ENCODE measurements at regions of chr12 and their contacts with region 1.

Region 1: GRCh38 chr12:55829967-55830600 is 697 bp upstream of the DNAJC14 start:
- DNase-seq: peak in 28 of 35 experiments; percentile 10 to 52 (median 28)
- ATAC-seq: peak; percentile 10 to 19 (median 12)
- H3K4me3 ChIP-seq: peak overlapping the region; percentile 72 to 86
- H3K4me3 Mint-ChIP-seq: peak overlapping the region; percentile 94 to 97 (median 94)
- H3K27ac ChIP-seq: peak overlapping the region; percentile 50
- H3K27ac Mint-ChIP-seq: peak overlapping the region; percentile 88 to 90
- H3K4me1 ChIP-seq: peaks cover 26 to 62% of the 10 kb centered on the region in 2 experiments
- H3K4me1 Mint-ChIP-seq: peaks cover 53 to 65% (median 65%) of the 10 kb centered on the region in 3 donors
- H3K27me3 ChIP-seq: no peaks in the 10 kb centered on the region
- H3K27me3 Mint-ChIP-seq: no peaks in the 10 kb centered on the region

Region 2: GRCh38 chr12:55817346-55818139 is 12.5 kb before region 1 on chr12 and contains the starts of genes ORMDL2 and SARNP:
- CTCF ChIA-PET with region 1: interaction called in 1 of 2 experiments, 62 read pairs
- POLR2A ChIA-PET with region 1: interaction called, 14 to 84 read pairs
- DNase-seq: peak; percentile 77 to 100 (median 97)
- ATAC-seq: peak; percentile 91 to 96 (median 94)
- H3K4me3 ChIP-seq: peak within 1 kb of the TSS; percentile 83 to 97
- H3K4me3 Mint-ChIP-seq: no peak within 1 kb of the TSS
- H3K27ac ChIP-seq: peak within 1 kb of the TSS; percentile 65
- H3K27ac Mint-ChIP-seq: no peak within 1 kb of the TSS
- H3K4me1 ChIP-seq: peaks cover 24 to 26% of the 10 kb centered on the region in 2 experiments
- H3K4me1 Mint-ChIP-seq: peaks cover 41 to 51% (median 50%) of the 10 kb centered on the region in 3 donors
- H3K27me3 ChIP-seq: no peaks in the 10 kb centered on the region
- H3K27me3 Mint-ChIP-seq: no peaks in the 10 kb centered on the region
- total RNA-seq, gene ORMDL2: 19.0 to 46.8 (median 41.6) TPM
- total RNA-seq, gene SARNP: 36.9 to 50.3 (median 46.8) TPM

Region 3: DNA sequence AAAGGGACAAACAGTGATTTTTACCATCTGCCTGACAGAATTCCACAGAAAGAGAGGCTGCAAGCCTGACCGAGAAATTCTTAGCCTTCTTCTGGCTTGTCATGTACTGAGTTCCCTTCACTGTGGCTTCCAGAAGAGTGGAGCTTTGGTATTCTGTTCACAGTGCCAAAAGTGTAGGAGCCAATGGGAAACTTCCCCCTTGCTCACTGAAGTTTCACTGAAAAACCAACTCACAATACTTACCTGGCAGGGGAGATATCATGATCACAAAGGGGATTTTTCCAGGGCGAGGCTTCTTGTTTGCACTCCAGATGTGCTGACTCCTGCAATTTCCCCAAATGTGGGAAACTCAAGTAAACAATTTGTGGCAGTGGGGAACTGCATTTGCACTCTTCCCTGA is 44.4 kb after region 1 on chr12:
- CTCF ChIA-PET with region 1: no interaction called
- POLR2A ChIA-PET with region 1: interaction called in 1 of 2 experiments, 10 read pairs
- DNase-seq: no peak
- ATAC-seq: no peak
- H3K4me3 ChIP-seq: no peak overlapping the region
- H3K4me3 Mint-ChIP-seq: no peak overlapping the region
- H3K27ac ChIP-seq: no peak overlapping the region
- H3K27ac Mint-ChIP-seq: no peak overlapping the region
- H3K4me1 ChIP-seq: no peaks in the 10 kb centered on the region
- H3K4me1 Mint-ChIP-seq: no peaks in the 10 kb centered on the region
- H3K27me3 ChIP-seq: no peaks in the 10 kb centered on the region
- H3K27me3 Mint-ChIP-seq: no peaks in the 10 kb centered on the region

Measured in T-cell (primary cell).